HCT116 (cell line): ENCODE measurements at regions of chr3 and their contacts with region 1.

Region 1: GRCh38 chr3:72265256-72266015 is 480.5 kb upstream of the PROK2 start:
- DNase-seq: peak; percentile 21
- ATAC-seq: peak; percentile 42; the same call in 1 of the 2 replicates
- H3K4me3 ChIP-seq: no peak overlapping the region
- H3K27ac ChIP-seq: no peak overlapping the region
- H3K4me1 ChIP-seq: peaks cover 5 to 8% of the 10 kb centered on the region in 2 experiments; a peak in 3 of 4 replicates
- H3K27me3 ChIP-seq: no peaks in the 10 kb centered on the region
- CTCF ChIP-seq: peak; percentile 24 to 45 (median 44); a peak in 3 of 6 replicates
- POLR2A ChIP-seq: no peak
- RAD21 ChIP-seq: peak; percentile 73

Region 2: GRCh38 chr3:71710906-71711494 is 554.4 kb before region 1 on chr3:
- CTCF ChIA-PET with region 1: no interaction called
- POLR2A ChIA-PET with region 1: no interaction called
- RAD21 ChIA-PET with region 1: no interaction called
- intact Hi-C with region 1: loop called (anchors 2 kb)
- DNase-seq: peak; percentile 21
- ATAC-seq: peak; percentile 80
- H3K4me3 ChIP-seq: no peak overlapping the region
- H3K27ac ChIP-seq: no peak overlapping the region
- H3K4me1 ChIP-seq: no peaks in the 10 kb centered on the region
- H3K27me3 ChIP-seq: no peaks in the 10 kb centered on the region
- CTCF ChIP-seq: peak; percentile 47 to 70 (median 48); a peak in 5 of 6 replicates
- POLR2A ChIP-seq: no peak
- RAD21 ChIP-seq: peak; percentile 78

Region 3: GRCh38 chr3:71875461-71875947 is 389.9 kb before region 1 on chr3:
- CTCF ChIA-PET with region 1: interaction called, 8 read pairs
- POLR2A ChIA-PET with region 1: no interaction called
- RAD21 ChIA-PET with region 1: no interaction called
- intact Hi-C with region 1: loop called (anchors 1 kb)
- DNase-seq: peak; percentile 42
- ATAC-seq: peak; percentile 100
- H3K4me3 ChIP-seq: no peak overlapping the region
- H3K27ac ChIP-seq: no peak overlapping the region
- H3K4me1 ChIP-seq: no peaks in the 10 kb centered on the region
- H3K27me3 ChIP-seq: 0 out of 2 replicates have a peak, but pooled peaks cover 9% of the 10 kb centered on the region
- CTCF ChIP-seq: peak; percentile 62 to 91 (median 86)
- POLR2A ChIP-seq: no peak
- RAD21 ChIP-seq: peak; percentile 79

Region 4: GRCh38 chr3:71926262-71926600 is 339.2 kb before region 1 on chr3:
- CTCF ChIA-PET with region 1: interaction called, 12 read pairs
- POLR2A ChIA-PET with region 1: no interaction called
- RAD21 ChIA-PET with region 1: interaction called, 5 to 6 read pairs
- intact Hi-C with region 1: loop called (anchors 1 kb)
- DNase-seq: peak; percentile 65
- ATAC-seq: peak; percentile 90
- H3K4me3 ChIP-seq: no peak overlapping the region
- H3K27ac ChIP-seq: no peak overlapping the region
- H3K4me1 ChIP-seq: 0 out of 4 replicates have a peak, but pooled peaks cover 0 to 3% of the 10 kb centered on the region in 2 experiments
- H3K27me3 ChIP-seq: no peaks in the 10 kb centered on the region
- CTCF ChIP-seq: peak; percentile 62 to 85 (median 77)
- POLR2A ChIP-seq: no peak
- RAD21 ChIP-seq: peak; percentile 83

Region 5: GRCh38 chr3:71955240-71956068 is 310.0 kb before region 1 on chr3:
- CTCF ChIA-PET with region 1: interaction called, 9 read pairs
- POLR2A ChIA-PET with region 1: no interaction called
- RAD21 ChIA-PET with region 1: no interaction called
- intact Hi-C with region 1: loop called (anchors 1 kb)
- DNase-seq: peak; percentile 45
- ATAC-seq: peak; percentile 86
- H3K4me3 ChIP-seq: no peak overlapping the region
- H3K27ac ChIP-seq: no peak overlapping the region
- H3K4me1 ChIP-seq: peaks cover 0 to 3% of the 10 kb centered on the region in 2 experiments; a peak in 1 of 4 replicates
- H3K27me3 ChIP-seq: peaks cover 17% of the 10 kb centered on the region; the same call in 1 of the 2 replicates
- CTCF ChIP-seq: peak; percentile 68 to 78 (median 72); a peak in 5 of 6 replicates
- POLR2A ChIP-seq: no peak
- RAD21 ChIP-seq: peak; percentile 89

Region 6: DNA sequence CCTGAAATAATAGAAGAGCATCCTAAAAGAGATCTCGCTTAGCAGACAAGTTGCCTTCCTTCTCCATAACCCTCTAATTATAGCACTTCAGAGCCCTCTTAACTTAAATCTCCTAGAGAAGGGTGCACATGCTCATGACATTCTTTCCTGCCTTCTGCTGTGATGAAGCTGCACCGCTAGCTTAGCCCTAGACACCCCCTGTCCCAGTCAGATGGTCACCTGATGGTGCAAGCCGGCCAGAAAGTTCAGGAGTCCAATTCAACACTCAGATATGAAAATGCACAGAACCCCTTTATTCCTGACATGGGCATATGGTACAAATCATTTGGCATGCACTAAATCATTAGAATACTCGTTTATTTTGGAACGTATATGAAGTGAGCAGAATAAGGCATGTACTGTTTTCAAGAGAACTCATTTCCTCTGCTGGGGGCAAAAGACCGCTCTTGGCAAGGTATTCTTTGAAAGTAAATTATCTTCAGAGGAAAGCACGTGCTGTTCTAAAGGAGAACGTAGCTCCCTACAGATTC is 60.1 kb before region 1 on chr3:
- CTCF ChIA-PET with region 1: no interaction called
- POLR2A ChIA-PET with region 1: no interaction called
- RAD21 ChIA-PET with region 1: no interaction called
- intact Hi-C with region 1: no loop called
- DNase-seq: no peak
- ATAC-seq: no peak
- H3K4me3 ChIP-seq: no peak overlapping the region
- H3K27ac ChIP-seq: no peak overlapping the region
- H3K4me1 ChIP-seq: no peaks in the 10 kb centered on the region
- H3K27me3 ChIP-seq: peaks cover 17% of the 10 kb centered on the region
- CTCF ChIP-seq: no peak
- POLR2A ChIP-seq: no peak
- RAD21 ChIP-seq: no peak